Activated CD8-positive, alpha-beta T cell treated with anti-CD3 and anti-CD28 coated beads, Interleukin-2, amount 10 ng/mL, durations not matched to agents 7 days and 5 days (primary cell): ENCODE measurements at regions of chr5 and their contacts with region 1.

Region 1: DNA sequence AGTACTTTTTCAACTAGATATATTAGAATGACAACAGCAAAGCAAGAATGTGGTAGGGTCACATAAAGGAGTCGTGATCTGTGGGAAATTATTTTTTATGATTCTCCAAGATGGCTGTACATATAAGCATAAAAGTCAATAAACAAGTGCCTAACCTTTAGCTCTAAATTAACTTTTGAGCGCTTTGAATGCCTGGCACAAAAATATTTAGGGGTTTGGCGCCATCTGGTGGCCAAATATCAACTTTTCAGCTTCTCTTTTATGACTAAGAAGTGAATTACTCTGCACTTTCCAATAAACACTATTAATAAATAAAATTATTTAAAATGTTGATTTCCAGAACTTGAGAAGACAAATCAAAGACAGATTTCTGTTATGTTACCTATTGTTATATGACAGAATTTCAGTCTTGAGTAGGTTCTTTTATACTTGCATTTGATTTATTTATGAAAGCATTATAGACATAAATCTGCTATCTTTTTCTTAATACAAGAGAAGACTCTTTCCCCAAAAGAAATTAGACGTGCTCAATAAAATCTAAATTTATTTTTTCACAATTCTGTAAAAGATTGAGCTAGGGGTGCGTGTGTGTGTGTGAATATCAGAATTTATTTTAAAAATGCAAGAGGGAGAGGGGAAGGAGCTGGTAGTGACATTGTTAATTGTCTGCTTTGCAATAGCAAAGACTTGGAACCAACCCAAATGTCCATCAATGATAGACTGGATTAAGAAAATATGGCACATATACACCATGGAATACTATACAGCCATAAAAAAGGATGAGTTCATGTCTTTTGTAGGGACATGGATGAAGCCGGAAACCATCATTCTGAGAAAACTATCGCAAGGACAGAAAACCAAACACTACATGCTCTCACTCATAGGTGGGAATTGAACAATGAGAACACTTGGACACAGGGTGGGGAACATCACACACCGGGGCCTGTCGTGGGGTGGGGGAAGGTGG is 36.7 kb upstream of the ARRDC3 start:
- DNase-seq: peak; percentile 82
- ATAC-seq: no peak
- H3K4me3 Mint-ChIP-seq: no peak overlapping the region
- H3K27ac Mint-ChIP-seq: no peak overlapping the region
- H3K4me1 Mint-ChIP-seq: peaks cover 3% of the 10 kb centered on the region
- H3K27me3 Mint-ChIP-seq: peaks cover 2% of the 10 kb centered on the region

Region 2: GRCh38 chr5:90866333-90866732 is 553.5 kb before region 1 on chr5:
- CTCF ChIA-PET with region 1: interaction called, 36 read pairs
- POLR2A ChIA-PET with region 1: no interaction called
- DNase-seq: no peak
- ATAC-seq: peak; percentile 44
- H3K4me3 Mint-ChIP-seq: no peak overlapping the region
- H3K27ac Mint-ChIP-seq: no peak overlapping the region
- H3K4me1 Mint-ChIP-seq: peaks cover 6% of the 10 kb centered on the region
- H3K27me3 Mint-ChIP-seq: peaks cover 6% of the 10 kb centered on the region

Region 3: GRCh38 chr5:91219803-91220371 is 200.0 kb before region 1 on chr5:
- CTCF ChIA-PET with region 1: interaction called, 11 read pairs
- POLR2A ChIA-PET with region 1: no interaction called
- DNase-seq: peak; percentile 39
- ATAC-seq: no peak
- H3K4me3 Mint-ChIP-seq: no peak overlapping the region
- H3K27ac Mint-ChIP-seq: no peak overlapping the region
- H3K4me1 Mint-ChIP-seq: peaks cover 3% of the 10 kb centered on the region
- H3K27me3 Mint-ChIP-seq: peaks cover 1% of the 10 kb centered on the region

Region 4: GRCh38 chr5:91397791-91398190 is 22.1 kb before region 1 on chr5:
- CTCF ChIA-PET with region 1: interaction called, 12 read pairs
- POLR2A ChIA-PET with region 1: interaction called, 4 read pairs
- DNase-seq: no peak
- ATAC-seq: no peak
- H3K4me3 Mint-ChIP-seq: no peak overlapping the region
- H3K27ac Mint-ChIP-seq: peak overlapping the region; percentile 53
- H3K4me1 Mint-ChIP-seq: peaks cover 12% of the 10 kb centered on the region
- H3K27me3 Mint-ChIP-seq: no peaks in the 10 kb centered on the region

Region 5: DNA sequence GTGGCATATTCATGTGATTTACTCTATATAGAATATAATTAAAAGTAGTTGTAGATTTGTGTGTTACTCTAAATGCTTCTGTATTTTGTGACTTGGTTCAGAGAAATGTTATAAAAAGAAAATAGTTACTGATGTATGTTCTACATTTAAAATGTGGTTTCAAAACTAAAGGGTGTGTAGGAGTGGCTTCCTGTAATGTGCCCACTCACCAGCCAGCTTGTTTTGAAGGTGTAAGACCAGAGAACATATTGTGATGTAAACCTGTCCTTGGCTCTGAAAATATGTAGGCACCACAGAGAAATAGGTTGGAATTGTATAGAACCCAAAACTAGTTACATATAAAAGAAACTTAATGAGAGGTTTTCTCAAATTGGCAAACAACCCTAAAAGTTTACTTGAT is 14.5 kb after region 1 on chr5:
- CTCF ChIA-PET with region 1: interaction called, 31 read pairs
- POLR2A ChIA-PET with region 1: no interaction called
- DNase-seq: no peak
- ATAC-seq: no peak
- H3K4me3 Mint-ChIP-seq: no peak overlapping the region
- H3K27ac Mint-ChIP-seq: no peak overlapping the region
- H3K4me1 Mint-ChIP-seq: peaks cover 17% of the 10 kb centered on the region
- H3K27me3 Mint-ChIP-seq: no peaks in the 10 kb centered on the region

Region 6: DNA sequence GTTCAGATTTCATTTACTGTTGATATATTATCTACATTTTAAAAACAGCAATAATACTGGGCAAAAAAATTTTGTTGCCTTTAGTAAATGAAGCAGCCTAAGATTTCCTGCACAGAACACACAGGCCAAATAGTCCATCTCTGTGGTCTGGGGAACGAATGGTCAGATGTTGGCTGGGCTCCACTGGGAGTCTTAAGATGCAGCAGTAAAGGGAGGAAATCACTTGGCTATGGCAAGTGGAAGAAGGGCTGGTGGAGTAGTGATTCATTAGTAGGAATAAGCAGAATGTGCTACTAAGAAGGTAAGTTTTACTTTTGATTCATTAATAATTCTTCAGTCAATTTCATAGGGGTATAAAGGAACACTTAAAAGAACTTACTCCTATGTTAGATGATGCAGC is 54.3 kb after region 1 on chr5:
- CTCF ChIA-PET with region 1: no interaction called
- POLR2A ChIA-PET with region 1: no interaction called
- DNase-seq: no peak
- ATAC-seq: no peak
- H3K4me3 Mint-ChIP-seq: no peak overlapping the region
- H3K27ac Mint-ChIP-seq: no peak overlapping the region
- H3K4me1 Mint-ChIP-seq: peaks cover 3% of the 10 kb centered on the region
- H3K27me3 Mint-ChIP-seq: no peaks in the 10 kb centered on the region

Region 7: GRCh38 chr5:91494447-91494996 is 74.7 kb after region 1 on chr5:
- CTCF ChIA-PET with region 1: no interaction called
- POLR2A ChIA-PET with region 1: no interaction called
- DNase-seq: no peak
- ATAC-seq: no peak
- H3K4me3 Mint-ChIP-seq: no peak overlapping the region
- H3K27ac Mint-ChIP-seq: no peak overlapping the region
- H3K4me1 Mint-ChIP-seq: peaks cover 9% of the 10 kb centered on the region
- H3K27me3 Mint-ChIP-seq: peaks cover 2% of the 10 kb centered on the region